ENCODE measurements at regions of chr17 and their contacts with region 1.

Region 1: GRCh38 chr17:59106463-59107305 is at the start of gene TRIM37:
- DNase-seq: peak; percentile 100
- H3K4me3 Mint-ChIP-seq: peak within 1 kb of the TSS; percentile 98
- H3K27ac Mint-ChIP-seq: peak within 1 kb of the TSS; percentile 94
- H3K4me1 Mint-ChIP-seq: peaks cover 47% of the 10 kb centered on the region
- H3K27me3 Mint-ChIP-seq: no peaks in the 10 kb centered on the region
- total RNA-seq, gene TRIM37: 21.4 to 27.3 TPM

Region 2: GRCh38 chr17:58082870-58083490 is 1023.7 kb before region 1 on chr17 and contains the start of gene DYNLL2:
- CTCF ChIA-PET with region 1: no interaction called
- POLR2A ChIA-PET with region 1: no interaction called
- intact Hi-C with region 1: loop called (anchors 10 kb)
- DNase-seq: peak; percentile 94
- H3K4me3 Mint-ChIP-seq: peak within 1 kb of the TSS; percentile 84
- H3K27ac Mint-ChIP-seq: peak within 1 kb of the TSS; percentile 81
- H3K4me1 Mint-ChIP-seq: peaks cover 33% of the 10 kb centered on the region
- H3K27me3 Mint-ChIP-seq: no peaks in the 10 kb centered on the region
- total RNA-seq, gene DYNLL2: 24.8 to 26.8 TPM

Region 3: GRCh38 chr17:58337600-58338453 is 768.9 kb before region 1 on chr17:
- CTCF ChIA-PET with region 1: no interaction called
- POLR2A ChIA-PET with region 1: no interaction called
- intact Hi-C with region 1: loop called (anchors 10 kb)
- DNase-seq: peak; percentile 98
- H3K4me3 Mint-ChIP-seq: peak overlapping the region; percentile 92
- H3K27ac Mint-ChIP-seq: peak overlapping the region; percentile 98
- H3K4me1 Mint-ChIP-seq: peaks cover 22% of the 10 kb centered on the region
- H3K27me3 Mint-ChIP-seq: no peaks in the 10 kb centered on the region

Region 4: GRCh38 chr17:59038734-59039133 is 68.0 kb before region 1 on chr17:
- CTCF ChIA-PET with region 1: no interaction called
- POLR2A ChIA-PET with region 1: no interaction called
- intact Hi-C with region 1: loop called (anchors 2 kb)
- DNase-seq: peak; percentile 60
- H3K4me3 Mint-ChIP-seq: no peak overlapping the region
- H3K27ac Mint-ChIP-seq: no peak overlapping the region
- H3K4me1 Mint-ChIP-seq: peaks cover 6% of the 10 kb centered on the region
- H3K27me3 Mint-ChIP-seq: no peaks in the 10 kb centered on the region

Region 5: DNA sequence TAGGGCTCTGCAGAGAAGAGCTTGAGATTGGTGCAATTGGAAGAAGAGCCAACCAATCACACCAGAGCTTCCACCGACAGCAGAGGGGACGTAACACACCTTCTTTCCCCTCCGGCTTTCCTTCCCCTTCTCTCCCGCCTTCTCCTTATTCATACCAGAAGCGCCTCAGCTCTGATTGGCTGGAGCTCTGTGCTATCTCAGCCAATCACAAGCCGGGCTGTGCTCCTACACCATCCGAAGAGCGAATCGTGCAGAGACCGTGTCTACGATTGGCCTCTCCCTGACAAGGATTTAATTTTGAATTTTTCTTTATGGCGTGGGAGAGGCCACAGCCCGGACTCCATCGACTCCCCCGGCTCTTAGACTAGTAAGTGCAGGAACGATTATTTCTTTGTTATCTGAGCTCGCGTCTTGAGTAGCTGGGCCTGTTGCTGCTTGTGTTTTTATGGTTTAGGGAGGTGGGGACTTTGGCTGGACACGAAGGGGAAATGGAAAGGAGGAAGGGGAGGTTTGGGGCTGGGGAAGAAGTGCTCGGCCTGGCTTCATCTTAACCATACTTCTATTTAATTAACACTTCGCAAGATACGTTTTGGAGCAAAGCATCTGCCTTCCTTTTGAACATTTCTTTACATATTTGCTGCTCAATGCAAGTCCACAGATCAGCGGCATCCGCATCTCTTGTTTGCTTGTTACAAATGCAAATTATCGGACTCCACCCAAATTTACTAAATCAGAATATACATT is 48.9 kb after region 1 on chr17 and contains the start of gene PRR11:
- CTCF ChIA-PET with region 1: interaction called, 6 read pairs
- POLR2A ChIA-PET with region 1: interaction called, 39 read pairs
- intact Hi-C with region 1: loop called (anchors 1 kb)
- DNase-seq: peak; percentile 97
- H3K4me3 Mint-ChIP-seq: no peak within 1 kb of the TSS
- H3K27ac Mint-ChIP-seq: no peak within 1 kb of the TSS
- H3K4me1 Mint-ChIP-seq: peaks cover 37% of the 10 kb centered on the region
- H3K27me3 Mint-ChIP-seq: no peaks in the 10 kb centered on the region
- total RNA-seq, gene PRR11: 67.3 to 70.2 TPM

Region 6: DNA sequence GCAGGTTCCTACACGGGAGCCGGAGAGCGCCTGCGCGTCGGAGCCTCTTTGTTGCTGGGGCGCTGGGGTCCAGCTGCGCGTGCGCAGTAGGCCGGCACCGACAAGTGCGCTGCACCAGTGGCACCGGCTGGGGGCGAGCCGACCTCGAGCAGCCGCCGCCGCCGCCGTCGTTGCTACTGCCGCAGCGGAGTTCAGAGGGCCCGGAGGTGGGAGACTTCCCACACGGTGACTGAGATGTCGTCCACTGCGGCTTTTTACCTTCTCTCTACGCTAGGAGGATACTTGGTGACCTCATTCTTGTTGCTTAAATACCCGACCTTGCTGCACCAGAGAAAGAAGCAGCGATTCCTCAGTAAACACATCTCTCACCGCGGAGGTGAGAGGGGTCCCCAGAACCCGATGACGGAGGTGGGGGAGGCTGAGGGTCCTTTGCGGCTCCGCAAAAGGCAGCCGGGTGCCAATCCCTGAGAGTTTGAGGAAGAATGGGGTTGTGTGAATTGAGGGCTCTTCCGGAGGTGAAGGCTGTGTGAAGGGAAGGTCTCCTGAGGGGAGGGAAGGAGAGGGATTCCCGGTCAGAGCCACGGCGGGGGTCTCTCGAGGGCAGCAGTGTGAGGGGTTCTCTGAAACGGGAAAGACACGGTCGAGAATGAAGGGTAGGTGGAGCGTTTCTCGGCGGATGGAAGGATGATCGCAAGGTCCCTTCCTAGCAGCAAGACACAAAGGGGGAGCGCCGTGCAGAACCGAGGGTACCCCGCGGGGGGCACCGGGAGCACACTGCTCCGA is 113.9 kb after region 1 on chr17 and contains the start of gene GDPD1:
- CTCF ChIA-PET with region 1: no interaction called
- POLR2A ChIA-PET with region 1: no interaction called
- intact Hi-C with region 1: loop called (anchors 5 kb)
- DNase-seq: peak; percentile 98
- H3K4me3 Mint-ChIP-seq: peak within 1 kb of the TSS; percentile 100
- H3K27ac Mint-ChIP-seq: peak within 1 kb of the TSS; percentile 80
- H3K4me1 Mint-ChIP-seq: peaks cover 13% of the 10 kb centered on the region
- H3K27me3 Mint-ChIP-seq: no peaks in the 10 kb centered on the region
- total RNA-seq, gene GDPD1: 2.9 to 3.5 TPM

Region 7: GRCh38 chr17:59435238-59435637 is 328.6 kb after region 1 on chr17:
- CTCF ChIA-PET with region 1: no interaction called
- POLR2A ChIA-PET with region 1: no interaction called
- intact Hi-C with region 1: loop called (anchors 1 kb)
- DNase-seq: no peak
- H3K4me3 Mint-ChIP-seq: no peak overlapping the region
- H3K27ac Mint-ChIP-seq: peak overlapping the region; percentile 89
- H3K4me1 Mint-ChIP-seq: peaks cover 61% of the 10 kb centered on the region
- H3K27me3 Mint-ChIP-seq: peaks cover 6% of the 10 kb centered on the region

Measured in activated CD4-positive, alpha-beta memory T cell treated with anti-CD3 and anti-CD28 coated beads for 36 hours (primary cell).